ENCODE measurements at regions of chr12 and their contacts with region 1.

Region 1: DNA sequence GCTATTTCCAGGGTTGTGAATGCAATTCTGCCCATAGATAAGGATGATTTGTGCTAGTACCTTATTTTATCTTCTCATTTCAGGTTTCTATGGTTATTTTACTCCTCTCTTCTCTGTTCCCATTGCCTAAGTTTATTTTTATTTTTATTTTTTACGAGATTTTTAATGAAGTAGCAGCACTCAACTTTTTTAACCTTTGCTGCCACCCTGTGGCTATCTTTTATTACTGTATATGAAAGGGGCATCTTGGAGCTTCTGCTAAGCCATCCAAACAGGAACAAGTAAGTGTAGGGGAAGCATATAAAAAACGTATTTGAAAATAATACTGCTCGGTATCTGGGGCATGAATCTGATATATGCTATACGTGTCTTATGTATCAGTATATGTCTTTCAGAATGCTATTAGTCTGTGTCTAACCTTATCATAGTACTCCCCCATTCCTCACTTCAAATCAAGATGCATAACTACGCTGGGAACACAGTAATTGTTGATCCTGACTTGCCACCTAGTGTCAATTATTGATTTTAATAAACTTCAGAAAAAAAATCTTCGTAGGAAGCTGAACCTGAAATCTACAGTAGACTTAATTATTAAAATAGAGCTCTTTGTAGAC is 60.3 kb downstream of the KLRG1 start:
- DNase-seq: peak; percentile 33
- CTCF ChIP-seq: peak; percentile 43

Region 2: GRCh38 chr12:8681041-8681902 is 368.4 kb before region 1 on chr12:
- CTCF ChIA-PET with region 1: interaction called, 25 read pairs
- POLR2A ChIA-PET with region 1: no interaction called
- DNase-seq: no peak
- CTCF ChIP-seq: no peak

Region 3: DNA sequence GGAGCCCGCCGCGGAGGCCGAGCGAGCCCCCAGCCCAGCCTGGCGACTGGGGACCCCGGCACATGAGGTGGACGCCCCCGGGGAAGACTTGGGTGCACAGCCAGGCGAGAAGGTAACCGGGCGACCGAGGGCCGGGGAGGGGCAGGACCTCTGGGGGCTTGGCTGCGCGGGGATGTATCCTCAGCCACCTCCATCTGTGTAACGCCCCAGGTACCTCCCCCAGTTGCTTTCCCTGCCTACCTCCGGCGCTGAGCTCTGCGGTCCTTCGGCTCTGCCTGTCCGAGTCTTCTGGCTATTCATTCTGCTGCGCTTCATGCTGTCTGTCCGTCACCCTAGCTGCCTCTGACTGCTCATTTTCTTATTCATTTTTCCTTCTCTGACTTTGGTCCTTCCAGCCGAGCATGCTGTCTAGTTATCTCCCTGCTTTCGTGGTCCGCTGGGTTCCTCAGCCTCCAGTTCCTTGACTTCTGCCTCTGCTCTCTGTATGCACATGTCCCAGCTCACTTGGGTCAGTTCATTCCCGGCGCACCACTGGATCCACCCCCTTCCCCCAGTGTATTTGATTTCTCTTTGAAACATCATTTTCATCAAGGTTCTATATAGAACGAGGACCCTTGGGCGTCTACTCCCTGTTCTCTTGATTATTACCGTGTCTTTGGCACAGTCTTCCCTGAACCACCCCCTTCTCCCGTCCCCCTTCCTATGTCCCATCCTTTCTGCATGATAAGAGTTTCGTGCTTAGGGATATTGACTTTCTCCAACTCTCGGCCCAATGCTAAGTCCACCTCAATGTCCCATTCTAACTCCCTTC is 134.7 kb before region 1 on chr12:
- CTCF ChIA-PET with region 1: interaction called, 11 read pairs
- POLR2A ChIA-PET with region 1: no interaction called
- DNase-seq: peak; percentile 81
- CTCF ChIP-seq: no peak

Region 4: GRCh38 chr12:9032202-9033178 is 17.1 kb before region 1 on chr12:
- CTCF ChIA-PET with region 1: interaction called, 45 read pairs
- POLR2A ChIA-PET with region 1: no interaction called
- DNase-seq: peak; percentile 31
- CTCF ChIP-seq: no peak

Region 5: DNA sequence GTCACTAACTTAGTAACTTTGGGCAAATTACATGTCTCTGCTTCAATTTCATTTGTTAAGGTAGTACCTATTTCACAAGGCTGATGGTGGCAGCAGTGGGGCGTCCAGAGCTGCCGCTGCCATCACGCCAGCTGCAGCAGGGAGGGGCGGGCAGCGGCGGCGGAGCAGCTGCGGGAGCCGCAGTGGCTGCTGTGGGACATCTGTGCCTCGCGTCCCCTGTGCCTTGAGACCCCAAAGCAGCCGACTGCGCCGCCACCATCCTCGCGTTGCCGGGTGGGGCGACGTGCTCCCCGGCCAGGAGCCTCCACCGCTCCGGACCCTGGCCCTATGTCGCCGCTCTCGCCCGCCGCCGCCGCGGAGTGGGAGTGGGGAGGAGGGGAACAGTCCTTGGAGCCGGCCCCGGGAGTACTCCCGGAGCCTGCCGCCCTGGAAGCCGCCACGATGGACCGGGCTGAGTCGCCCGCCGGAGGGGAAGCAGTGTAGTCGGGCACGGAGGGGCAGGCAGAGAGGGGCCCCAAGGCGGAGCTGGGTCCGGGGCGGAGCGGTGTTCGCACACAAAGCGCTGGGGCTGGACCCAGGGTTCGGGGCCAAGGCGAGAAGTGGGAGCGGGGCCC is 14.7 kb after region 1 on chr12:
- CTCF ChIA-PET with region 1: interaction called, 32 read pairs
- POLR2A ChIA-PET with region 1: no interaction called
- DNase-seq: peak; percentile 72
- CTCF ChIP-seq: peak; percentile 46

Region 6: GRCh38 chr12:9347328-9348127 is 297.9 kb after region 1 on chr12:
- CTCF ChIA-PET with region 1: no interaction called
- POLR2A ChIA-PET with region 1: no interaction called
- DNase-seq: no peak
- CTCF ChIP-seq: no peak

Measured in GM10248 (cell line).